GM13976 (cell line): ENCODE measurements at regions of chr19 and their contacts with region 1.

Region 1: DNA sequence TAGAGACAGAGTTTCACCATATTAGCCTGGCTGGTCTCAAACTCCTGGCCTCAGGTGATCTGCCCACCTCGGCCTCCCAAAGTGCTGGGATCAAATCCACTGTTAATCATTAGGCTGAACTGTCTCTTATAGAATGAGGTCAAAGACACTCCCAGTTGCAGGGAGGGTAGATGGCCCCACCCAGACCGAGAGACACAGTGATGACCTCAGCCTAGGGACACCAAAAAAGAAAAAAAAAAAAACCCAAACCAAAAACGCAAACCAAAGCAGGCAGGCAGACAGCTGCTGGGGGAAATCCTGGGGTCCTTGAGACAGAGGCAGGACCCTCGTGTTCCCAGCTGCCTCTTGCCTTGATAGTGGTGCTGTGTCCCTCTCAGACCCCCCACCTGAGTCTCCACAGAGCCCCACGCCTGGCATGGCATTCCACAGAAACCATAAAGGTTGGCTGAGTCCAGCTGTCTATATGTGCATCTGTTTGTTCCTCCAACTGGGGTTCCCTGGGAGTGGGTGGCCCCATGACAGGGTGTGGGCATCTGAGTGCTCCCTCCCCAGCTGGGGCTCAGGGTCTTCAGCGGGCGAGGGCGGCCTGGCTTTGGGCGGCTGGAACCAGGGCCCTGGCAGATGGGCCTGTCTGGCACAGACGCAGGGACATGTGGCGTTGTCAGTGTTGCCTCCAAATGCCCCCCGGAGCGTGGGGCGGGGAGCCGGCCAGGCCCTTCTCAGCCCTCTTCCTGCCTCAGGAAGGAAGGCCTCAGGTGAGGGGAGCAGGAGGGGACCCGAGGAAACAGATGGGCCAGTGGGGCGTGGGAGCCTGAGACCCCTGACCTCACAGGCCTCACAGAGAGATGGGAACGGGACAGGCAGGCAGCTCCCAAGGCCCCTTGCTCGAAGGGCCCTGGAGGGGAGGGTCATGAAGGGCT is 5.2 kb downstream of the DAND5 start:
- DNase-seq: peak; percentile 73
- CTCF ChIP-seq: no peak

Region 2: DNA sequence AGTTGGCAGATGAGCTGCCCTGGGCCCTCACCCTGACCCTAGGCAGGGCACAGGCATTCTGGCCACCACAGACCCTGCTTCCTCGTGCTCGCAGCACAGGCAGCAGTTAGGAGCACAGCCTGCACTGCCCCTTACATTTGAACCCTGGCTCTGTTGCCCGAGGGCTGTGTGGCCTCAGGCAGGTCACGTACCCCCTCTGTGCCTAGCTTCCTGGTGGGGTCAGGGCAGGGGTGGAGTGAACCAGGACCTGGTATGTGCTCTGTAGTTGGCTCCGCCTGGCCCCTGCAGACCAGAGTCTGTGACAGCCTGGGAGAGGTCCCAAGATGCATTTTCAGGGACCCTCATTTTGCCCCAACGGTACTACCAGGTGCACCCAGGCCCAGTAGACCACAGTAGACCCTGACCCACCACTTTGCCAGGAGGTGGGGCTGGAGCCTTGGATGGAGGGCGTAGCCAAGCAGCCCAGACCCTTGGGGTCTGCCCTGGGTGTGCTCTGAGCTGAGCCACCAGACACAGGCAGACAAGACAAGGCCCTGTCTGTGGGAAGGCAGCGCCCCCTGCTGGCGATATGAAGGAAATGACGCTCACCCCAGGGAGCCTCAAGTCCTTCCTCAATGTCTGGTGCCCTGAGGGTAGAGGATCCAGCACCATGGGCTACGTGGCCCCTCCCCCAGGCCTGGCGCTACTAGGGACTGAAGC is 119.0 kb after region 1 on chr19:
- in situ Hi-C with region 1: loop called (anchors 5 kb)
- DNase-seq: peak; percentile 95
- CTCF ChIP-seq: peak; percentile 86